ENCODE measurements at regions of chr20 and their contacts with region 1.

Region 1: DNA sequence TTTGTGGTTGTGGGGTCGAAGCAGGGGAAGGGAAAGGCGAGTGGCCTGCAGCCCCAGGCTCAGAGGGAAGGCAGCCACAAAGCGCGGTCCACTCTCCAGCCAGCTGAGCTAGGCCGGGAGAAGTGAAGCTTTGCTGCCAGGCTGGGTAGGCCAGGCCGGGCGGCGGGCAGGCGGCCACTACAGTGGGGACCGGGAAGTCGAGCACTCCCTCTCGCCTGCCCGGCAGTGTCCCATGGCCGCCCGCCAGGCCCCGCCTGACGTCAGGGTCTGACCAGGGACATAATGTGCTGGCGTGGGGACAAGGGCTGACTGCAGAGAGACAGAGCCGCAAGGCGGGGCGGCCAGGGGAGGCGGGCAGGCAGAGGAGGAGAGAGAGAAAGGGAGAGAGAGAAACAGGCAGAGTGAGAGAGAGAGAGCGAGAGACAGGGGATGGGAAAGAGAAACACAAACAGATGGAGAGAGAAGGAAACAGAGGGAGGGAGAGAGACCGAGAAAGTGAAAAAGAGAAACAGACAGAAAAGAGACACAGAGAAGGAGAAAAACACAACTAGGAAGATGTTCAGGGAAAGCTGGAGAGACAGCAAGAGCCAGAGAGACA is 94.6 kb upstream of the PTPN1 start:
- DNase-seq: peak; percentile 78
- H3K4me3 ChIP-seq: no peak overlapping the region
- H3K27ac ChIP-seq: peak overlapping the region; percentile 73
- H3K4me1 ChIP-seq: peaks cover 22% of the 10 kb centered on the region
- H3K27me3 ChIP-seq: no peaks in the 10 kb centered on the region
- CTCF ChIP-seq: no peak

Region 2: DNA sequence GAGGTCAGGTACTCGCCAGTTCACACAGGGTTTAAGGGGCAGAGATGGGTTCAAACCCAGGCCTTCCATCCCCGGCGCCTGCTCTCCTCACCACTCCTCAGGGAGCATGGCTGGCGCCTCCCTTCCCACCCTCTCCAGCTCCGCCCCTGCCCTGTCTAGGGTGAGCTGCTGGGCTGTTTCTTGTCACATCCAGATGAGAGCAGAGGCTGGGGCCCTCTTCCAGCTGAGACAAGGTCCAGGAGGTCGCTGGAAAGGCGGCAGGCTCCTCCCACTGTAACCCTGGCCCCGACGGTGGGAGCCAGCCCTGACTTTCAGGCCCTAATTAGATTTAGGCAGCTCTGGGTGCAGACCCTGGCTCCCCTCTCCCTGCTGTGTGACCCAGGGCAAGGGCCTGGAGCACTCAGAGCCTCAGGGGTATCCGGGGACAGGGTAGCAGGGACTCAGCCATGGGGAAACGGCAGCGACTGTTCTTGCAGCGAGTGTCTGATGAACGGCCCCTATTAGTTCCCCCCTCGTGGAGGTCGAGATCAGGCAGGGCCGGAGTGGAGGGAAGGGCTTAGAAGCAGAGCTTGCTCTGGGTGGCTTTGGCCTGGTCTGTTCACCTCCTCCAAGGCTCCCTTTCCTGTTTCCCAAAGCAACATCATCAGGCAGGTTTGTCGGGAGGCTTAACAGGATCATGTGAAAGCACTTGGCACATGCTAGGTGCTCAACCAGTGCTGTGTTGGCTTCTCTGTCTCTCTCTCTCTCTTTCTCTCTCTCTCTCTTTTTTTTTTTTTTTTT is 399.4 kb before region 1 on chr20:
- CTCF ChIA-PET with region 1: no interaction called
- dilution Hi-C with region 1: loop called (anchors 5 kb)
- in situ Hi-C with region 1: no loop called
- intact Hi-C with region 1: no loop called
- DNase-seq: no peak
- H3K4me3 ChIP-seq: no peak overlapping the region
- H3K27ac ChIP-seq: no peak overlapping the region
- H3K4me1 ChIP-seq: peaks cover 20% of the 10 kb centered on the region
- H3K27me3 ChIP-seq: no peaks in the 10 kb centered on the region
- CTCF ChIP-seq: no peak

Region 3: DNA sequence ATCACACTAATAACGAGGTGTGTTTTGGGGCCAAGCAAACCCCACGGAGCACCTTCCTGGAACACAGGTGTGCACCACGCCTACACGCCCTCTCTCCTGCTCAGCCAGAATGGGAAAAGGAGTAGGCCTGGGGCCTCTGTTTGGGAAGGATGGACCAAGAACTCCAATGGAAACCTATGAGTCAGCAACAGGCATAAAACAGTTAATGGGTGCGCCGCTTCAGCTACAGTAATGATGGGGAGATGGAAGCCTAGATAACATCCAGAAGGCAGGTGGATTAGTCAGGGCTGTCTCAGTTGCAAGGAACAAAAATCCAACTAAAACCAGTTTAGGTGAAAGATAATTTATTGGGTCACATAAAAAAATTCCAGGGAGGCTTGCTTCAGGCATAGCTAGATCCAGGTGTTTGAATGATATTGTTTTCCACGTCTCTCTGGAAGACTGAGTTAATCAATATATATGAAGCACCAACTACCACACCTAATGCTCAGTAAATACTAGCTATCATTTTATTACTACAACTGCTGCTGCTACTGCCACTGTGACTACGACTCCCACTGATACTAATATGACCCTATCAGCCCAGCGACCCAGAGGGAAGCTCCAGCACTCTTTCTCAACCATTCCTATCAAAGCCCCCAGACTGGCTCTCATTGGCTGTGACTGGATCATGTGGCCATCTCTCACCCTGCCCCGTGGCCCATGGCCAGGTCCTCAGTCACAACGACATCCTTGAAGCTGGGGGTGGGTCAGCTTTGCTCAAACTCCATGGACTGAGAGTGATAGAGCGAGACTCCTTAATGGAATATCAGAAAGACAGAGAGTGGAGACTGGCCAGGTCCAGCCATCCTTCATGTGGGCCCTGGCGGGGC is 60.7 kb before region 1 on chr20:
- CTCF ChIA-PET with region 1: no interaction called
- dilution Hi-C with region 1: loop called (anchors 5 kb)
- in situ Hi-C with region 1: no loop called
- intact Hi-C with region 1: no loop called
- DNase-seq: peak; percentile 68
- H3K4me3 ChIP-seq: no peak overlapping the region
- H3K27ac ChIP-seq: no peak overlapping the region
- H3K4me1 ChIP-seq: peaks cover 1% of the 10 kb centered on the region
- H3K27me3 ChIP-seq: no peaks in the 10 kb centered on the region
- CTCF ChIP-seq: no peak

Region 4: DNA sequence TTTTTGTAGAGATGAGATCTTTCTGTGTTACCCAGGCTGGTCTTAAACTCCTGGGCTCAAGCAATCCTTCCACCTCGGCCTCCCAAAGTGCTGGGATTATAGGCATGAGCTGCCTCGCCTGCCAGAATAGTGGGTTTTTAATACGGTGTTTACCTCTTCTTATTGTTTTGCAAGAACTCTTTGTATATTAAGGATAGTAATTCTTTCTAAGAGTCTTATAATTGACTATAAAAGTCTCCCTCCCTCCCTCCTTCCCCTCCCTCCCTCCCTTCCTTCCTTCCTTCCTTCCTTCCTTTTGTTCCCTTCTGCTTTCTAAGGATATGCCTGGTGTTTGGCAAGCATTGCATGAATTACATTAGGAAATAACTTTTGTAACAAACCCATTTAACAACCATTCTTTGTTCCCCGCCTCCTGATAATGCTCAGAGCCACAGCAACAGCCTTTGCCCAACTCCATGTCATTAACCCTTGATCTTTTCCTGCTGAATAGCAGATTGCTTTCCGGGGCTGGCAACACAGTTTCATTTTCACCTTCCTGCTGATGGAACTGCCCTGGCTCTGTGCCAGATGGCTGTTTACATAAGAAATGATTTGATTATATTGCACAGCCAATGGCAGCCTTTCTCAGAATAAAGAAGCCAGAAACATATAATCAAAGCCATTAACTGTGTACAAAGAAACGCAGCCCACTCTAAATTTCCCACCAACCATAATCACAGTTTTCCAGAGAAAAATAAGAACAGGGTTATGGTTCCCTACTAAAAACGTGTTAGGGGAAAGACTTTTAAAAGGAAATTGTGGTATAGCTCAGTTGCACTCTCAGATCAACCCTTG is 49.1 kb before region 1 on chr20:
- CTCF ChIA-PET with region 1: no interaction called
- dilution Hi-C with region 1: no loop called
- in situ Hi-C with region 1: no loop called
- intact Hi-C with region 1: no loop called
- DNase-seq: peak; percentile 47
- H3K4me3 ChIP-seq: no peak overlapping the region
- H3K27ac ChIP-seq: no peak overlapping the region
- H3K4me1 ChIP-seq: no peaks in the 10 kb centered on the region
- H3K27me3 ChIP-seq: no peaks in the 10 kb centered on the region
- CTCF ChIP-seq: no peak

Region 5: DNA sequence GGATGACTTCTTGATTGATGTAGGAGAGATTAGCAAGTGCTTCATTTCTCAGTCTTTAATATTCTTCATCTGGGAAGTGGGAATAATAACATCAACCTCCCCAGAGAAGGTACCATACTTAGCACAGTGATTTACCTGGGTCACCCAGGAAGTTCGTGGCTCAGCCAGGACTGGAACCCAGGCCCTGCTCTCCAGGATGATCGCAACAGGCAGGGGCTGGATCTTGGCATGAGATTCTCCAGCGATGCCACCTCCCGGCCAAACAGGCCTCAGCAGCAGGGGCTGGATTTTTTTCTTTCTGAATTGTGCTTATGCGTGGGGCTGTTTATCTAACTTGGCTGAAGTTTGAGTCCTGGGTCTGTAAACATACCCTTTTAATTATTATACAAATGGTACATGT is 35.0 kb before region 1 on chr20:
- CTCF ChIA-PET with region 1: no interaction called
- dilution Hi-C with region 1: loop called (anchors 5 kb)
- in situ Hi-C with region 1: no loop called
- intact Hi-C with region 1: no loop called
- DNase-seq: peak; percentile 28
- H3K4me3 ChIP-seq: no peak overlapping the region
- H3K27ac ChIP-seq: no peak overlapping the region
- H3K4me1 ChIP-seq: peaks cover 18% of the 10 kb centered on the region
- H3K27me3 ChIP-seq: no peaks in the 10 kb centered on the region
- CTCF ChIP-seq: peak; percentile 50 to 75

Region 6: GRCh38 chr20:50624270-50625016 is 208.8 kb after region 1 on chr20:
- CTCF ChIA-PET with region 1: no interaction called
- dilution Hi-C with region 1: no loop called
- in situ Hi-C with region 1: no loop called
- intact Hi-C with region 1: no loop called
- DNase-seq: peak; percentile 39
- H3K4me3 ChIP-seq: no peak overlapping the region
- H3K27ac ChIP-seq: no peak overlapping the region
- H3K4me1 ChIP-seq: peaks cover 21% of the 10 kb centered on the region
- H3K27me3 ChIP-seq: no peaks in the 10 kb centered on the region
- CTCF ChIP-seq: no peak

Measured in mammary epithelial cell (primary cell).